ENCODE measurements at regions of chr1 and their contacts with region 1.

Region 1: GRCh38 chr1:187091666-187092065 is 262.9 kb downstream of the PLA2G4A start:
- DNase-seq: no peak
- ATAC-seq: no peak
- H3K4me3 ChIP-seq: no peak overlapping the region
- H3K4me3 Mint-ChIP-seq: no peak overlapping the region
- H3K27ac ChIP-seq: no peak overlapping the region
- H3K27ac Mint-ChIP-seq: no peak overlapping the region
- H3K4me1 ChIP-seq: peaks cover 7% of the 10 kb centered on the region
- H3K4me1 Mint-ChIP-seq: peaks cover 23% of the 10 kb centered on the region
- H3K27me3 ChIP-seq: no peaks in the 10 kb centered on the region
- H3K27me3 Mint-ChIP-seq: no peaks in the 10 kb centered on the region
- CTCF ChIP-seq: no peak

Region 2: DNA sequence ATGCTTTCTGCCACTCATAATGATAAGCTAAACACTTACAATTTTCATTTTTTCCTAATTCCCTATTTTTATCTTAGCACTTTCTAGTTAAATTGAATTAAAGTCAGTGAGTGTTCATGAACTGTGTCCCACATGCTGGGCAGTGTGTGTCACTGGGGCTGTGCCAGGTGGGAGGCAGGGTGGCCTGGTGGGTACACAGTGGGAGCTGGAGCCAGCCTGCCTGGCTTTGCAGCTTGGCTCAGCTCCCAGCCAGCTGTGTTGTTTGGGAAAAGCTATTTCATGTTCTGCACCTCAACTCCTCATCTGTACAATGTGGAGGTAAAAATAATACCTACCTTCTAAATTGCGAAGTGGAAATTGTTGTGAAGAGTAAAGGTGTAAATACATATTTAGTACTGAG is 24.5 kb before region 1 on chr1:
- CTCF ChIA-PET with region 1: no interaction called
- POLR2A ChIA-PET with region 1: interaction called, 5 read pairs
- intact Hi-C with region 1: loop called in 1 of 2 experiments (anchors 2 kb)
- DNase-seq: no peak
- ATAC-seq: no peak
- H3K4me3 ChIP-seq: no peak overlapping the region
- H3K4me3 Mint-ChIP-seq: no peak overlapping the region
- H3K27ac ChIP-seq: no peak overlapping the region
- H3K27ac Mint-ChIP-seq: no peak overlapping the region
- H3K4me1 ChIP-seq: no peaks in the 10 kb centered on the region
- H3K4me1 Mint-ChIP-seq: no peaks in the 10 kb centered on the region
- H3K27me3 ChIP-seq: no peaks in the 10 kb centered on the region
- H3K27me3 Mint-ChIP-seq: no peaks in the 10 kb centered on the region
- CTCF ChIP-seq: no peak

Measured in CD8-positive, alpha-beta T cell (primary cell).